ENCODE measurements at regions of chr6 and their contacts with region 1.

Region 1: DNA sequence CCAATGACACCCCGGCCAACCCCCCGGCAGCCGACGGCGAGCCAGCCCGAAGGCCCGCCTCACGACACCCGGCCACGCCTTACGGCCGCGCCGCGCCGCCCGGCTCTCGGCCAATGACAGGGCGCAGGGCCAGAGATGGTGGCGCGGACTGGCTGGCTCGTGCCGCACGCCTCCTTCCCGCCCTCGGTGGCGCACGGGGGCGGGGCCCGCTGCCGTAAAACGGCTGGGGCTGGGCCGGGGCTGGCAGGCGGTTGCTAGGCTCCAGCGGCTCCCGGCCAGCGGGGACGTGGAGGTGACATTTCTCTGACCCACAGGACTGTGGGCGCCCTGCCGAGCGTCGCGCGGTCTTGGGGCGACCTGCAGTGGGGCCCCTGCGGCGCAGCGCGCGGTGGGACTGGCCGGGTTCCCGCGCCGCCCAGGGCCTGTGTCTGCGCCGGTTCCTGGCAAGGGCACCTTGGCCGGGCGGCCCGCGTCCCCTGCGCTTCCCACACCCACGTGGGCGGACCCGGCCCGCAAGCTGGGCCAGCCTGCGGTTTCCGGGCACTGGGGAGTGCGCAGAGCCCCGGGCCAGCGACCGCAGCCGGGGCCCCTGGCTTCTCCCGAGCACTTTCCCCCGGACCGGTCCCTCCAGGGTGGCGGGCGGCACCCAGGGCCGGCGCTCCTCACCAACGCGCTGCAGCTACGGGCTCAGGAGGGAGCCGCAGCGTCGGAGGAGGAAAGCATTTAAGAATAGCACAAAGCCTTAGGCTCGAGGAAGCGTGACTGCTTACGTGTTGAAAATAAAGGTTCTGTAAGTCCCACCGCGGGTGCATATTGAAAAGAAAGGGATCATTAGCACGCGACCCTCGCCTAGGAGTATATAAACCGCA is at the start of gene MPC1:
- DNase-seq: peak; percentile 82 to 97 (median 92)
- ATAC-seq: peak; percentile 92
- H3K4me3 ChIP-seq: peak within 1 kb of the TSS; percentile 66
- H3K4me3 Mint-ChIP-seq: peak within 1 kb of the TSS; percentile 98
- H3K27ac ChIP-seq: peak within 1 kb of the TSS; percentile 72 to 73
- H3K27ac Mint-ChIP-seq: peak within 1 kb of the TSS; percentile 94
- H3K4me1 ChIP-seq: peaks cover 16% of the 10 kb centered on the region
- H3K4me1 Mint-ChIP-seq: peaks cover 14% of the 10 kb centered on the region
- H3K27me3 ChIP-seq: no peaks in the 10 kb centered on the region
- H3K27me3 Mint-ChIP-seq: no peaks in the 10 kb centered on the region
- CTCF ChIP-seq: no peak
- total RNA-seq, gene MPC1: 17.4 to 19.3 TPM

Region 2: GRCh38 chr6:166275714-166276166 is 107.4 kb before region 1 on chr6:
- CTCF ChIA-PET with region 1: no interaction called
- POLR2A ChIA-PET with region 1: no interaction called
- intact Hi-C with region 1: loop called (anchors 5 kb)
- DNase-seq: peak; percentile 47 to 91 (median 80)
- ATAC-seq: peak; percentile 96
- H3K4me3 ChIP-seq: no peak overlapping the region
- H3K4me3 Mint-ChIP-seq: no peak overlapping the region
- H3K27ac ChIP-seq: no peak overlapping the region
- H3K27ac Mint-ChIP-seq: no peak overlapping the region
- H3K4me1 ChIP-seq: peaks cover 10% of the 10 kb centered on the region
- H3K4me1 Mint-ChIP-seq: peaks cover 8% of the 10 kb centered on the region
- H3K27me3 ChIP-seq: no peaks in the 10 kb centered on the region
- H3K27me3 Mint-ChIP-seq: peaks cover 8% of the 10 kb centered on the region
- CTCF ChIP-seq: peak; percentile 98

Region 3: DNA sequence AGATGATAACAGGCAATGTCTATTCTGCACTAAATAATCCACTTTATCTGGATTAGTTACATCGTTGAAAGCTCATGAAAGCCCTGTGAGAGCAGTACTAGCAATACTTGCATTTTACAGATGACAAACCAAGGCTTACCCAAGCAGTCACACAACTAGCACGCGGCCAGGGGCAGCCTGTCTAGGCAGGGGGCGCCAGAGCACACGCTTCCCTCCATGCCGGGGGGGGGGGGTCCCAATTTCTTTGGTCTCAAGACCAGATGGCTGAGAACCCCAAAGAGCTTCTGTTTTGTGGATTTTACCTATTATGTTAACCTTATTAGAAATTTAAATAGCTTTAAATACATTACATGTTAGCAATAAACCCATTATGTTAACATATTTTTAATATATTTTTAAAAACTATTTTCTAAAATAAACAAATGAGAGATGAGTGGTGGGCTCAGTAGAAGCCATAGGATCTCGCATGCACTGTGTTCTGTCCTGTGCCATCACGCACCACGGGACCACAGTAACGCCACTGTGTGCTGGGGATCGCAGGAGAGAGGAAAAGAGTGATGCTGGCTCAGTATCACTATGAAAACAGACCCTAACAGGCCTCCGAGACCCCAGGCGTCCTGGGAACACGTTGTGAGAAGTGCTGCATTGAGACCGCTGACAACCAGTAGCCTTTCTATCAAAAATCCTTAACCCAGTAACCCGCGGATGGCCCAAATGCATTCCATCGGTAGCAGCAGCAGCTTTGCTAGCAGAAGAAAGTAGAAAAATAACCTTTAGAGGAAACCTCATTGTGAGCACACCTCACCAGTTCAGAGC is 69.7 kb before region 1 on chr6:
- CTCF ChIA-PET with region 1: interaction called, 10 read pairs
- POLR2A ChIA-PET with region 1: no interaction called
- intact Hi-C with region 1: loop called (anchors 1 to 5 kb)
- DNase-seq: peak in 13 of 14 experiments; percentile 23 to 79 (median 44)
- ATAC-seq: peak; percentile 99
- H3K4me3 ChIP-seq: no peak overlapping the region
- H3K4me3 Mint-ChIP-seq: no peak overlapping the region
- H3K27ac ChIP-seq: no peak overlapping the region
- H3K27ac Mint-ChIP-seq: no peak overlapping the region
- H3K4me1 ChIP-seq: peaks cover 2% of the 10 kb centered on the region
- H3K4me1 Mint-ChIP-seq: no peaks in the 10 kb centered on the region
- H3K27me3 ChIP-seq: peaks cover 12 to 21% of the 10 kb centered on the region in 2 experiments
- H3K27me3 Mint-ChIP-seq: peaks cover 23% of the 10 kb centered on the region
- CTCF ChIP-seq: peak; percentile 78

Region 4: DNA sequence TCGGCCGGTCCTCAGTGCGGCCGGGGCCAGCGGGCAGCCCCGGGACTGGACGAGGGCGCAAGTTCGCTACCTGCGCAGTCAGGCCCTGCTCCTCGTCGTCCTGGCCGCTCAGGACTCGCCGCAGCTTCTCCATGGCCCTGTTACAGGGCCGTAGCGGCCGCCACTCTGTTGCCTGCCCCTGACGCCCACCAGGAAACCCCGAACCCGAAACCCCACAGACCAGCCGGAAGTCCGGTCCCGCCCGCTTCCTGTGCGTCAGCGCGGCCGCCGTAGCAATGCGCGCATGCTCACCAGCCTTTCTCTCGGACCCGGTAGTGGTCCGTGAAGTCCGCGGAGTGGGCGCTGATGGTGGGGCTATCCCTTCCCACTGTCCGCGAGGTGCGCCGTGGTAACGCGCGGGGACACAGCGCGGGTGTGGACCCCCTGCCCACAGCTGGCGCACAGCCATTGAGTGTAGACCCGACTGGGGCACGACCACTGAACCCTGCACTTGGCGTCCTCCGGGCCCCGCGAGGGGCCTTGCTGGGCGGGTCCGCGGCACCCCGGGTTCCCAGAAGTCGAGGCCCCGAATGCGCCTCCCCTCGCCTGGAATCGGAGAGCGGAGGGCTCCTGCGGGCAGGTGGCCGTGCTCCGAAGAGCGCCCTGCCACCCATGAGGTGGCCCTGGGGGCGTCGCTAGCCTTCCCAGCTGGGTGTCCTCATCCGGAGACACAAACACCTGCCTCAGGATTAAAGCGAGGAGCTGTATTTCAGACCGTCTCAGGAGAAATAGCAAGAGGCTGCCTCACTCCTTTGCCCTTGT is 40.6 kb before region 1 on chr6 and contains the start of gene SFT2D1:
- CTCF ChIA-PET with region 1: interaction called, 4 read pairs
- POLR2A ChIA-PET with region 1: interaction called, 8 read pairs
- intact Hi-C with region 1: loop called (anchors 1 to 5 kb)
- DNase-seq: peak; percentile 32 to 86 (median 64)
- ATAC-seq: peak; percentile 22
- H3K4me3 ChIP-seq: peak within 1 kb of the TSS; percentile 92
- H3K4me3 Mint-ChIP-seq: peak within 1 kb of the TSS; percentile 90
- H3K27ac ChIP-seq: peak within 1 kb of the TSS; percentile 78 to 82
- H3K27ac Mint-ChIP-seq: peak within 1 kb of the TSS; percentile 82
- H3K4me1 ChIP-seq: peaks cover 44% of the 10 kb centered on the region
- H3K4me1 Mint-ChIP-seq: peaks cover 9% of the 10 kb centered on the region
- H3K27me3 ChIP-seq: no peaks in the 10 kb centered on the region
- H3K27me3 Mint-ChIP-seq: no peaks in the 10 kb centered on the region
- CTCF ChIP-seq: no peak
- total RNA-seq, gene SFT2D1: 10.4 to 12.5 TPM

Region 5: GRCh38 chr6:166402582-166403277 is 19.6 kb after region 1 on chr6:
- CTCF ChIA-PET with region 1: interaction called, 11 read pairs
- POLR2A ChIA-PET with region 1: interaction called, 3 read pairs
- intact Hi-C with region 1: no loop called
- DNase-seq: no peak
- ATAC-seq: no peak
- H3K4me3 ChIP-seq: no peak overlapping the region
- H3K4me3 Mint-ChIP-seq: no peak overlapping the region
- H3K27ac ChIP-seq: no peak overlapping the region
- H3K27ac Mint-ChIP-seq: no peak overlapping the region
- H3K4me1 ChIP-seq: peaks cover 8% of the 10 kb centered on the region
- H3K4me1 Mint-ChIP-seq: no peaks in the 10 kb centered on the region
- H3K27me3 ChIP-seq: no peaks in the 10 kb centered on the region
- H3K27me3 Mint-ChIP-seq: no peaks in the 10 kb centered on the region
- CTCF ChIP-seq: no peak

Region 6: DNA sequence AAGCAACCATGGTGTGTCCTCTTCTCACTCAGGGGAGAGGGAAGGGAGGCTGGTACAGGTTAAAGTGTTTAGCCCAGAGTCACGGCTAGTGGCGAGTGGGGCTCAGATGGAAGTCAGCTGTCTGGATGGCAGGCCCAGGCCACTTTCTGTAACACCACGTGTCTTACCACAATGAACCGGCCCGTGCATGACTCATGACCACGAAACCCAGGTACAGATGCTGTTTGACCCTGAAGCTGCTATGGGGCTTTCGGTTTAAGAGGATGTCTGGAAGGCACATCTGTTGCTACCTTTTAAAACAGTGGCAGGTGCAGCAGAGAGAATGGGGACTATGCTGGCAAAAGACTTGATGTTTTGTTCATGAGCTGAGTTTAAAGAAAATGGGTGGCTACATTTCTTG is 36.1 kb after region 1 on chr6:
- CTCF ChIA-PET with region 1: interaction called, 4 read pairs
- POLR2A ChIA-PET with region 1: interaction called, 3 read pairs
- intact Hi-C with region 1: loop called (anchors 5 kb)
- DNase-seq: peak in 13 of 14 experiments; percentile 42 to 85 (median 57)
- ATAC-seq: peak; percentile 23
- H3K4me3 ChIP-seq: no peak overlapping the region
- H3K4me3 Mint-ChIP-seq: peak overlapping the region; percentile 35
- H3K27ac ChIP-seq: peak overlapping the region; percentile 47 to 75
- H3K27ac Mint-ChIP-seq: peak overlapping the region; percentile 98
- H3K4me1 ChIP-seq: peaks cover 82% of the 10 kb centered on the region
- H3K4me1 Mint-ChIP-seq: peaks cover 73% of the 10 kb centered on the region
- H3K27me3 ChIP-seq: no peaks in the 10 kb centered on the region
- H3K27me3 Mint-ChIP-seq: no peaks in the 10 kb centered on the region
- CTCF ChIP-seq: no peak

Region 7: DNA sequence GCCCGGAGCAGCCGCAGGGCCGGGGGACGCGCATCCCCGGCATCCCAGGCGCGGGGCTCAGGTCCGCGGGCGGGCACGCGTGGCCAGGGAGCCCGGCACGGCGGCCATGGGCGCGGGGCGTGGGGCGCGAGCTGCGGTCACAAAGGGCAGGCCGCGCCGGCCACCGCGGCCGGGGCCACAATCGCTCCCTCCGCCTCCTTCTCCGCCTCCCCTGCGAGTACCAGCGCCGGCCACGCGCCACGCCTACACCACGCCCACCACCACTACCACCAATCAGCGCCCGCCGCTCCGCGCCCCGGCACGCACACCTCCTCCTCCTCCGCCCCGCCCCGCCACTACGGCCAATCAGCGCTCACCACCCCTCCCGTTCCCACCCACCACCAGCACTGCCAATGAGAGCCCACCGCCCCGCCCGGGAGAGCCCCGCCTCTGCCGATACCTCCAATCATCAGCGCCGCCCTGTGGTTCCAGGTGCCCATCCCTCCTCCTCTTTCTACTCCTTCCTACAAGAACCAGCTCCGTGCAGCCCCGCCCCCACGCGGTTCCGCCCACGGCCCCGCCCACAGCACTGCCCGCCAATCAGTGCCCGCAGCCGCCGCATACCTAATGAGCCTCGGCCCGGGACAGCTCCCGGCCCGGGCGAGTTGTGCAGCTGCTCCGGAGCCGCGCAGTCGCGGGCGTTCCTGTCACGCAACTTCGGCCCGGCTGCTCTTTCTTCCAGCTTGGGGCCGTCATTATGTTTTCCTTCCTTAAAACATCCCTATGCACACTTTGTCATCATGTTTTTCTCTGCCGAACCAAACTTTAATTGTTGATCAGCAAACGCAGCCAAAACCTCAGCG is 244.1 kb after region 1 on chr6 and contains the start of gene RPS6KA2:
- CTCF ChIA-PET with region 1: interaction called, 3 read pairs
- POLR2A ChIA-PET with region 1: interaction called, 4 read pairs
- intact Hi-C with region 1: loop called (anchors 1 to 2 kb)
- DNase-seq: peak; percentile 100
- ATAC-seq: peak; percentile 92
- H3K4me3 ChIP-seq: peak within 1 kb of the TSS; percentile 78
- H3K4me3 Mint-ChIP-seq: peak within 1 kb of the TSS; percentile 91
- H3K27ac ChIP-seq: peak within 1 kb of the TSS in 1 of 2 donors; percentile 64
- H3K27ac Mint-ChIP-seq: peak within 1 kb of the TSS; percentile 92
- H3K4me1 ChIP-seq: peaks cover 24% of the 10 kb centered on the region
- H3K4me1 Mint-ChIP-seq: peaks cover 31% of the 10 kb centered on the region
- H3K27me3 ChIP-seq: peaks cover 4 to 20% of the 10 kb centered on the region in 2 experiments
- H3K27me3 Mint-ChIP-seq: peaks cover 29% of the 10 kb centered on the region
- CTCF ChIP-seq: no peak
- total RNA-seq, gene RPS6KA2: 5.6 to 6.2 TPM

Region 8: GRCh38 chr6:166640342-166641043 is 257.3 kb after region 1 on chr6:
- CTCF ChIA-PET with region 1: no interaction called
- POLR2A ChIA-PET with region 1: no interaction called
- intact Hi-C with region 1: no loop called
- DNase-seq: peak in 3 of 14 experiments; percentile 13 to 48 (median 32)
- ATAC-seq: peak; percentile 37
- H3K4me3 ChIP-seq: no peak overlapping the region
- H3K4me3 Mint-ChIP-seq: no peak overlapping the region
- H3K27ac ChIP-seq: no peak overlapping the region
- H3K27ac Mint-ChIP-seq: no peak overlapping the region
- H3K4me1 ChIP-seq: peaks cover 4% of the 10 kb centered on the region
- H3K4me1 Mint-ChIP-seq: peaks cover 12% of the 10 kb centered on the region
- H3K27me3 ChIP-seq: peaks cover 20 to 22% of the 10 kb centered on the region in 2 experiments
- H3K27me3 Mint-ChIP-seq: peaks cover 40% of the 10 kb centered on the region
- CTCF ChIP-seq: no peak

Region 9: DNA sequence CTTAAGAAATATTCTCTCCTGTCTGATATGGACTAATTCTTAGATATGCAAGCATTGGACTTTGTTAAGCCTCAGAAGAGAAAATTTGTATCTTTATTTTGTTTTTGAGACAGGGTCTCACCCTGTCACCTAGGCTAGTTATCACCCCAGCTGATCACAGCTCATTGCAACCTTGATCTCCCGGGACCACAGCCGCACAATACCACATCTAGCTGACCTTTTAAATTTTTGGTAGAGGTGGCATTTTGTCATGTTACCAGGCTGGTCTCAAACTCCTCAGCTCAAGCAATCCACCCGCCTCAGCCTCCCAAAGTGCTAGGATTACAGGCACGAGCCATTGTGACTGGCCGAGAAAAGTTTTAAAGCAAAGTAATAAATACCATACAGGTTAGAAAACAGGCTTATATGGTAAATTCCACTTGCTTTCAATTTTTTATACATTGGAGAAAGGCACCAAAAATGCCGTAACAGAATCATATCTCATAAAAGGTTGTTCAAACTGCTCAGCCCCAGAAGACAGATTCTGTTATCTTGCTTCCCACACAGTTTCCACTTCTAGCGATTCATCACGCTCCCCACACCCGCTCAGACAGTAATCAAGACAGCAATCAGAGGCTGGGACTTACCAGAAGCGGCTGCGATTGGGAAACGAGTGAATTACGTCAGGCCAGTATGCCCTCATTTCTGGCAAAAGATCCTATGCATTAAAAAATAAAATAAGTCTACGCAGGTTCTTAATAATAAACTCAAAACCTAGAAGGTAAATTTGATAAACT is 559.4 kb after region 1 on chr6:
- CTCF ChIA-PET with region 1: no interaction called
- POLR2A ChIA-PET with region 1: no interaction called
- intact Hi-C with region 1: no loop called
- DNase-seq: peak in 12 of 14 experiments; percentile 38 to 84 (median 59)
- ATAC-seq: peak; percentile 93
- H3K4me3 ChIP-seq: no peak overlapping the region
- H3K4me3 Mint-ChIP-seq: peak overlapping the region; percentile 57
- H3K27ac ChIP-seq: peak overlapping the region; percentile 45 to 62
- H3K27ac Mint-ChIP-seq: peak overlapping the region; percentile 86
- H3K4me1 ChIP-seq: peaks cover 39% of the 10 kb centered on the region
- H3K4me1 Mint-ChIP-seq: peaks cover 46% of the 10 kb centered on the region
- H3K27me3 ChIP-seq: no peaks in the 10 kb centered on the region
- H3K27me3 Mint-ChIP-seq: no peaks in the 10 kb centered on the region
- CTCF ChIP-seq: no peak